MCF 10A (cell line): ENCODE measurements at regions of chr20 and their contacts with region 1.

Region 1: DNA sequence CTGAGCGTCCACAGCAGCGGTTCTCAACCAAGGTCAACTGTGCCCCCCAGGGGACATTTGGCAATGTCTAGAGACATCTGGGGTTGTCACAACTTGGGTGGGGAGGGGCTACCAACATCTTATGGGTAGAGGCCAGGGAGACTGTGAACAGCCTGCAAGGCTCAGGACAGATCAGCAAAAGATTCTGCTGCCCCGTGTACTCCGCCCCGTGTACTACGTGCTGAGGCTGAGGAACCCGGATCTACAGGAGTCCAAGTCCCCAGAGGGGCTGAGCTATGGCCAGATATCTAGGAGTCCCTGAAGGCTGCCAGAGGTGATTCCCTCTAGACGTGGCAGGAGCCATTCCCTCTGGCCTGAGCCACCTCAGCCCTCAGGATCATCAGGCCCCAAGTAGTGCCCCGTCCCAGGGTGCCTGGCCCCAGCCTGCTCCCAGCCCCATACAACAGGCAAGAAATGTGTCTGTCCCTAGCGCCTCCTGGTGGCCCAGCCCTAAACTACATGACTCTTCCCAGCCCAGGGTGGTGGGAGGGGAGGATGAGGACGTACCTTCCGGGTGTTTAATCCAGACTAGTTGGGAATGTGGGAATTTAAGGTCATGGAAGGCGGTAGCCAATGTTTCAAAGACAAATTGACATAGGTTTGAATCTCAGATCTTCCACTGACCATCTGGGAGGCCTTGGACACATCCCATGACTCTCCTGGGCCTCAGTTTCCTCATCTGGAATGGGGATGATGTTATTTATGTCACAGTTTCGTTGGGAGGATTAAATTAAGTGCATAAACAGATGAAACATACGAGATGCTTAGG is 49.5 kb upstream of the PTPN1 start:
- DNase-seq: peak; percentile 91
- H3K4me3 Mint-ChIP-seq: peak overlapping the region; percentile 32
- H3K27ac Mint-ChIP-seq: peak overlapping the region; percentile 84
- H3K4me1 Mint-ChIP-seq: peaks cover 23% of the 10 kb centered on the region
- H3K27me3 Mint-ChIP-seq: no peaks in the 10 kb centered on the region
- CTCF ChIP-seq: peak; percentile 94

Region 2: GRCh38 chr20:50120897-50121693 is 339.6 kb before region 1 on chr20:
- CTCF ChIA-PET with region 1: interaction called, 18 read pairs
- POLR2A ChIA-PET with region 1: no interaction called
- intact Hi-C with region 1: no loop called
- DNase-seq: peak; percentile 75
- H3K4me3 Mint-ChIP-seq: no peak overlapping the region
- H3K27ac Mint-ChIP-seq: no peak overlapping the region
- H3K4me1 Mint-ChIP-seq: peaks cover 8% of the 10 kb centered on the region
- H3K27me3 Mint-ChIP-seq: no peaks in the 10 kb centered on the region
- CTCF ChIP-seq: peak; percentile 89

Region 3: GRCh38 chr20:50308513-50309279 is 152.0 kb before region 1 on chr20:
- CTCF ChIA-PET with region 1: interaction called, 4 read pairs
- POLR2A ChIA-PET with region 1: no interaction called
- intact Hi-C with region 1: loop called (anchors 10 kb)
- DNase-seq: peak; percentile 99
- H3K4me3 Mint-ChIP-seq: no peak overlapping the region
- H3K27ac Mint-ChIP-seq: peak overlapping the region; percentile 49
- H3K4me1 Mint-ChIP-seq: peaks cover 66% of the 10 kb centered on the region
- H3K27me3 Mint-ChIP-seq: no peaks in the 10 kb centered on the region
- CTCF ChIP-seq: peak; percentile 6

Region 4: GRCh38 chr20:50415516-50416113 is 45.0 kb before region 1 on chr20:
- CTCF ChIA-PET with region 1: interaction called, 10 read pairs
- POLR2A ChIA-PET with region 1: interaction called, 14 read pairs
- intact Hi-C with region 1: no loop called
- DNase-seq: peak; percentile 99
- H3K4me3 Mint-ChIP-seq: peak overlapping the region; percentile 59
- H3K27ac Mint-ChIP-seq: peak overlapping the region; percentile 96
- H3K4me1 Mint-ChIP-seq: peaks cover 43% of the 10 kb centered on the region
- H3K27me3 Mint-ChIP-seq: no peaks in the 10 kb centered on the region
- CTCF ChIP-seq: no peak

Region 5: GRCh38 chr20:50471204-50471610 is 10.5 kb after region 1 on chr20:
- CTCF ChIA-PET with region 1: interaction called, 10 read pairs
- POLR2A ChIA-PET with region 1: interaction called, 3 read pairs
- intact Hi-C with region 1: no loop called
- DNase-seq: no peak
- H3K4me3 Mint-ChIP-seq: no peak overlapping the region
- H3K27ac Mint-ChIP-seq: no peak overlapping the region
- H3K4me1 Mint-ChIP-seq: peaks cover 6% of the 10 kb centered on the region
- H3K27me3 Mint-ChIP-seq: no peaks in the 10 kb centered on the region
- CTCF ChIP-seq: no peak

Region 6: DNA sequence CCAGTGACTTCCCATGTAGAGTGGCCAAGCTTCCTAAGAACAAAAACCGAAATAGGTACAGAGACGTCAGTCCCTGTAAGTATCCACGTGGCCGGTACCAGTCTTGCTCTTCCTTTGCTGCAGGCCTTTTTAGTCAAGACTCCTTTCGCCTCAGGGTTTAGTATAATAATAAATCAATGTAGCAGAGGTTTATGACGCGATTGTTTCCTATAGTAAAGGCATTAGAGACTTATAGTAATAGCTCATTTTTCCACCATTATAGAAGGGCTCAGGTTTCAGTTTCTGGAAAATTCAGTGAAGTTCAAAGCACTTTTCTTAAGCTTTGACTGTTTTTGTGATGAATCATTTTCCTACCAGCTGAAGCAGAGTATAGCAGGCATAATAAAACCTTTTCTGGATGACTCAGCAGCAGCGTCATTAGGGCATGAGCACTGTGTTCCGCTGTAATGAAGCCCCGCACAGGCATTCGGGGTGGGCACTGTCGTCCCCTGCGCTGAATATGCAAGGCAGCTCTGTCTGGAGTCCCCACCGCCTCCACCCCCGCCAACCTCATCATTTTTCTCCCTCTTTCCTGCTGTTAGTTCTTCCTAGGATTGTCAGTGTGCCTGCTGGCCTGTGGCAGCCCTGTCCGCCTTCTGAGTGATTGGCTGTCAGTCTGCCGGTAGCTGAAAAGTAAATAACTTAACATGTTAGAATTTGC is 100.9 kb after region 1 on chr20:
- CTCF ChIA-PET with region 1: interaction called, 17 read pairs
- POLR2A ChIA-PET with region 1: no interaction called
- intact Hi-C with region 1: no loop called
- DNase-seq: peak; percentile 89
- H3K4me3 Mint-ChIP-seq: peak overlapping the region; percentile 55
- H3K27ac Mint-ChIP-seq: peak overlapping the region; percentile 97
- H3K4me1 Mint-ChIP-seq: peaks cover 47% of the 10 kb centered on the region
- H3K27me3 Mint-ChIP-seq: no peaks in the 10 kb centered on the region
- CTCF ChIP-seq: no peak

Region 7: GRCh38 chr20:50967586-50967985 is 506.9 kb after region 1 on chr20:
- CTCF ChIA-PET with region 1: no interaction called
- POLR2A ChIA-PET with region 1: no interaction called
- intact Hi-C with region 1: no loop called
- DNase-seq: no peak
- H3K4me3 Mint-ChIP-seq: no peak overlapping the region
- H3K27ac Mint-ChIP-seq: no peak overlapping the region
- H3K4me1 Mint-ChIP-seq: no peaks in the 10 kb centered on the region
- H3K27me3 Mint-ChIP-seq: peaks cover 11% of the 10 kb centered on the region
- CTCF ChIP-seq: no peak